ENCODE measurements at regions of chr7 and their contacts with region 1.

Region 1: DNA sequence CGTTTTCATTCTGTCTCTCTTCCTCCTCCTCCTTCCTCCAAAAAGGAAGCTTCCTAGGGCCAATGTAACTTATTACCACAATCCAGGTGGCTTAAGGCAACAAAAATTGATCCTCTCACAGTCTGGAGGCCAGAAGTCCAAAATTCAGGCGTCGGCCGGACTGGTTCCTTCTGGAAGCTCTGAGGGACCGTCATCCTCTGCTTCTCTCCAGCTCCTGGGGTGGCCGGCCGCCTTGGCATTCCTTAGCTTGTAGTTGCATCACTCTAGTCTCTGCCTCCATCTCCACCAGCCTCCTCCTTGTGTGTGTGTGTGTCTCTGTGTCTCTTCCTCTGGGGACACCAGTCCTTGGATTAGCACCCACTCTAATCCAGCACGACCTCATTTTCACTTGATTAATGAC is 89.0 kb upstream of the NPTX2 start:
- DNase-seq: no peak
- ATAC-seq: no peak
- H3K4me3 ChIP-seq: no peak overlapping the region
- H3K27ac ChIP-seq: no peak overlapping the region
- H3K4me1 ChIP-seq: no peaks in the 10 kb centered on the region
- H3K27me3 ChIP-seq: no peaks in the 10 kb centered on the region
- CTCF ChIP-seq: no peak

Region 2: DNA sequence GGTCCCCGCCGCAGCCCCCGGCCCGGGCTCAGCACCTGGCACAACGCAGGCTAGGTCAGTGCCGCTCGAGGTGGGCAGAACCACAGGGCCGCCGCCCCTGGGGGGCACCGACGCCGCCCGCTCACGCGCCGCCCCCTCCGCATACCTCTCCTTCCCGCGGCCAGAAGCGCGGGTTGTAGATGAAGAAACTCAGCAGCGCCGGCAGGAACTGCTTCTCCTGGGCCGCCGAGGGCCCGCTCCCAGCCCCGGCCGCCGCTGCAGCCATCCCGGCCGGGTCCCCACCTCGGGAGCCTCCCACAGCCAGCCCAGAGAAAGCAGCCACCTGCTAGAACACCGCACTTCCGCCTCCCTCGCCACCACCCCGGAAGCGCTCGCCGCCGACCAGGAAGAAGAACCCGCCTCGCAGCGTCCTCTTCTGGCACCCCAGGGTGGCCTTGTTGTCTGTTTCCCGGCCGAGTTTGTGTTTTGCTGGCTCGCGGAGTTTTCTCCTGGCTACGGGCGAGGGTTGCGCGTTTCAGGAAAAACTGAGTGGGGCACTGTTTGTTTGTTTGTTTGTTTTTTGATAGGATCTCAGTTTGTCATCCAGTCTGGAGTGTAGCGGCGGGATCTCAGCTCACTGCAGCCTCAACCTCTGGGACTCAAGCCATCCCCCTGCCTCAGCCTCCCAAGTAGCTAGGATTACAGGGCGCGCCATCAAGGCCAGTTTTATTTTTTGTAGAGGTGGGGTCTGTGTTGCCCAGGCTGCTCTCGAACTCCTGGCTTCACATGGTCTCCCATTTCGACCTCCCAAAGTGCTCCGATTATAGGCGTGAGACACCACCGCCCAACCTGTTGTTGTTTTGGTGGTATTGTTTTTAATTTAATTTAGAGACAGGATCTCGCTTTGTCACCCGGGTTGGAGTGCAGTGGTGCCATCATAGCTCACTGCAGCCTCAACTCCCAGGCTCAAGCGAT is 555.8 kb before region 1 on chr7:
- CTCF ChIA-PET with region 1: no interaction called
- POLR2A ChIA-PET with region 1: no interaction called
- in situ Hi-C with region 1: no loop called
- intact Hi-C with region 1: no loop called
- DNase-seq: peak; percentile 41
- ATAC-seq: peak; percentile 97
- H3K4me3 ChIP-seq: peak overlapping the region; percentile 81 to 83
- H3K27ac ChIP-seq: peak overlapping the region; percentile 84
- H3K4me1 ChIP-seq: no peaks in the 10 kb centered on the region
- H3K27me3 ChIP-seq: no peaks in the 10 kb centered on the region
- CTCF ChIP-seq: peak; percentile 65

Region 3: GRCh38 chr7:98514211-98515031 is 13.7 kb before region 1 on chr7:
- CTCF ChIA-PET with region 1: no interaction called
- POLR2A ChIA-PET with region 1: no interaction called
- in situ Hi-C with region 1: no loop called
- intact Hi-C with region 1: no loop called
- DNase-seq: no peak
- ATAC-seq: peak; percentile 46; the same call in 1 of the 2 replicates
- H3K4me3 ChIP-seq: no peak overlapping the region
- H3K27ac ChIP-seq: no peak overlapping the region
- H3K4me1 ChIP-seq: no peaks in the 10 kb centered on the region
- H3K27me3 ChIP-seq: no peaks in the 10 kb centered on the region
- CTCF ChIP-seq: no peak

Region 4: GRCh38 chr7:98551611-98552273 is 23.7 kb after region 1 on chr7:
- CTCF ChIA-PET with region 1: no interaction called
- POLR2A ChIA-PET with region 1: interaction called, 17 read pairs
- in situ Hi-C with region 1: no loop called
- intact Hi-C with region 1: no loop called
- DNase-seq: no peak
- ATAC-seq: no peak
- H3K4me3 ChIP-seq: no peak overlapping the region
- H3K27ac ChIP-seq: no peak overlapping the region
- H3K4me1 ChIP-seq: no peaks in the 10 kb centered on the region
- H3K27me3 ChIP-seq: no peaks in the 10 kb centered on the region
- CTCF ChIP-seq: no peak